ENCODE measurements at regions of chr21 and their contacts with region 1.

Region 1: DNA sequence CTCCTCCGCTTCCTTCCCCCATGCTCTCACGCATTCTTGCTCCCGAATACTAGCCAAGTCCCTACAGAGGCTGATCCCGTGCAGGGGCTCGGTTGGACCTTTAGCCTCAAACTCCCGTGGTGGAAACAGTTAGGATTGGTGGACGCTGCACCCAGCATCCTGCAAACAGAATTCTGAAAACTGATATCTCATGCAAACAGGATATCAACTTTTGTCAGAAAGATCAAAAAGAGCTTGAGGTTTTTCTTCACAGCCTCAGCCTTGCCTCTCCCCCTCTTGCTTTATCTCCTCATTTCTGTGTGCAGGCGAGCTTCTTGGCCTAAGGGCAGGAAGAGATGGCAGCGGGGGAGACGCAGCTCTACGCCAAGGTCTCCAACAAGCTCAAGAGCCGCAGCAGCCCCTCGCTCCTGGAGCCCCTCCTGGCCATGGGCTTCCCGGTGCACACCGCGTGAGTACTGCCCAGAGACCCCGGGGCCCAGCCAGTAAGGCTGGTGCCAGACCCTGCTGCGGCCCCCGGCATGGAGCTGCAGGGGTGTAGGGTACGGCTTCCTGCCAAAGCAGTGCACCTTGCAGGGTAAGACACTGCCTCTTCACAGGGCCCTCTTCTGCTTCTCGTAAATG is at the start of gene UBASH3A:
- DNase-seq: peak; percentile 74
- ATAC-seq: peak; percentile 52
- H3K4me3 Mint-ChIP-seq: peak within 1 kb of the TSS; percentile 96
- H3K27ac Mint-ChIP-seq: peak within 1 kb of the TSS; percentile 99
- H3K4me1 Mint-ChIP-seq: peaks cover 57% of the 10 kb centered on the region
- H3K27me3 Mint-ChIP-seq: no peaks in the 10 kb centered on the region
- total RNA-seq, gene UBASH3A: 75.3 to 89.5 TPM

Region 2: GRCh38 chr21:42309753-42310221 is 93.9 kb before region 1 on chr21:
- CTCF ChIA-PET with region 1: interaction called, 10 read pairs
- DNase-seq: peak; percentile 81
- ATAC-seq: peak; percentile 79
- H3K4me3 Mint-ChIP-seq: no peak overlapping the region
- H3K27ac Mint-ChIP-seq: no peak overlapping the region
- H3K4me1 Mint-ChIP-seq: peaks cover 18% of the 10 kb centered on the region
- H3K27me3 Mint-ChIP-seq: peaks cover 20% of the 10 kb centered on the region

Region 3: GRCh38 chr21:42337830-42338728 is 65.6 kb before region 1 on chr21:
- CTCF ChIA-PET with region 1: interaction called, 10 read pairs
- DNase-seq: peak; percentile 87
- ATAC-seq: peak; percentile 90
- H3K4me3 Mint-ChIP-seq: no peak overlapping the region
- H3K27ac Mint-ChIP-seq: no peak overlapping the region
- H3K4me1 Mint-ChIP-seq: peaks cover 27% of the 10 kb centered on the region
- H3K27me3 Mint-ChIP-seq: peaks cover 18% of the 10 kb centered on the region

Region 4: GRCh38 chr21:42392721-42393442 is 10.8 kb before region 1 on chr21:
- CTCF ChIA-PET with region 1: interaction called, 14 read pairs
- DNase-seq: no peak
- ATAC-seq: peak; percentile 78
- H3K4me3 Mint-ChIP-seq: peak overlapping the region; percentile 56
- H3K27ac Mint-ChIP-seq: peak overlapping the region; percentile 73
- H3K4me1 Mint-ChIP-seq: peaks cover 50% of the 10 kb centered on the region
- H3K27me3 Mint-ChIP-seq: no peaks in the 10 kb centered on the region

Region 5: GRCh38 chr21:42424914-42425541 is 21.3 kb after region 1 on chr21:
- CTCF ChIA-PET with region 1: interaction called, 41 read pairs
- DNase-seq: peak; percentile 93
- ATAC-seq: peak; percentile 70
- H3K4me3 Mint-ChIP-seq: peak overlapping the region; percentile 52
- H3K27ac Mint-ChIP-seq: peak overlapping the region; percentile 93
- H3K4me1 Mint-ChIP-seq: peaks cover 72% of the 10 kb centered on the region
- H3K27me3 Mint-ChIP-seq: no peaks in the 10 kb centered on the region

Measured in activated CD8-positive, alpha-beta memory T cell treated with anti-CD3 and anti-CD28 coated beads, Interleukin-2, amount 10 ng/mL, durations not matched to agents 7 days and 5 days (primary cell).